ENCODE measurements at regions of chr2 and their contacts with region 1.

Region 1: DNA sequence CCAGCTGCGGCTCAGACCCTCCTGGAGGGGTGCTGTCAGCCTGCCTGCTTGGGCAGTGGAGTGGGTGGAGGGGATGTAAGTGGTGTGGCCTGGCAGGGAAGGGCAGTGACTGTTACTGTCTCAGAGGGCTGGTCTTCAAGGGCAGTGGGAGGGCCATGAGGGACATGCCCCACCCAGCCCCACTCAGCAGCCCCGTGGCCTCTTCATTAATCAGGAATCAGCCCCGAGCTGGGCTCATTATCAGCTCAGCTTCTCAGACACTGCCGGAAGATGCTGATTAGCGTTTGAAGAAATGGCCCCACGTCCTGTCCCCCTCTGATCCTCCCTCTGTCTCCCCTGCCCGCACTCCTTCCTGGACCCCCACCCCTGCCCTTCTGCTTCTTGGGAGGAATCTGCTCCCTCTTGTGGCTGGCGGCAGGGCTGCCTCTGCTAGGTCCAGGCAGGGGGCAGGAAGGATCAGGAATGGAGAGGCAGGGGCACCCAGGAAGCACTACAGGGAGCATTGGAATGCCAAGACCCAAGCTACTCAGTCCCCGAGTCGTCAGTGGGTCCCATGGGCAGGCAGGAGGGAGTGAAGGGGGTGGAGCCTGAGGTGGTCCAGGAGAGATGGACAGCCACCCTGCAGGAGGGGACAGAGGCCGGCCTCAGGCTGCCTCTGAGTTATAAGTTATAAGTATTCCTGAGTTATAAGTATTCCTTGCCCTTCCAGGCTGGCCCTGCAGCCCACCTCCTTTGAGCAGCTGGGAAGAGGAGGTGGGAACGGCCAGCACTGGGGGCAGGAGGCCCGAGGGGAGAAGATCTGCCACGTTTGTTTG is 7.0 kb downstream of the ASIC4 start:
- DNase-seq: no peak
- ATAC-seq: peak; percentile 32
- H3K4me3 ChIP-seq: no peak overlapping the region
- H3K27ac ChIP-seq: no peak overlapping the region
- H3K4me1 ChIP-seq: peaks cover 10% of the 10 kb centered on the region
- H3K27me3 ChIP-seq: peaks cover 91% of the 10 kb centered on the region
- CTCF ChIP-seq: peak; percentile 40

Region 2: DNA sequence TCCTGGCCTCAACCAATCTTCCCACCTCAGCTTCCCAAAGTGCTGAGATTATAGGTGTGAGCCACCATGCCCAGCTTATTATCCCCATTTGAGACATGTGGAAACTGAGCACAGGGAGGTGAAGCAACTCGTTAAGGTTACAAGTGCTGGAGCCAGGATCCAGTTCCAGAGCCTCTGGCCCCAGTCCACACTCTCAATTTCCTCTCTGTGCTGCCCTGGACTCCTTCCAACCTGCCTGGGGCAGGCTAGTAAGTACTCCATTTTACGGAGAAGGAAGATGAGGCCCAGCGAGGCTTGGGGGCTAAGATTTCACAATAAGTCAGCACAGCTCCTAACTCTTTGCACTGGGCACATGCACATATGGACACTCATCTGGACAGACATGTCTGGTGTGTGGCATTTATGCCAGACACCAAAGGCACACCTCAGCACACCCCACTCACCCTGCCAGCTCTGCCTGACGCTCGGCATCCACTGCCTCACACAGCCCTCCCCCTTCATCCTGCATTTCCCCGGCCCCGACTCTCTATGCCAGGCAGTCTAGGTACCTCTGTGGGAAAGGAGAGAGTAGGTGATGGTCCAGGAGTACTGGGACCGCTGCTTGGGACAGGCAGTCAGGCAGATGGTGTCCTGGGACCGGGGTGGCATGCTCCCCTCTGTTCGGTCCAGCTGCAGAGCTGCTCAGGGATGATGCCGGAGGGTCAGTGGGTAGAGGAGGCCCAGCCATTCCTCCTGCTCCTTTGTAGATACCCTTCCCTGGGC is 500.5 kb before region 1 on chr2:
- intact Hi-C with region 1: no loop called
- DNase-seq: no peak
- ATAC-seq: peak; percentile 15
- H3K4me3 ChIP-seq: no peak overlapping the region
- H3K27ac ChIP-seq: no peak overlapping the region
- H3K4me1 ChIP-seq: no peaks in the 10 kb centered on the region
- H3K27me3 ChIP-seq: peaks cover 8% of the 10 kb centered on the region
- CTCF ChIP-seq: no peak

Region 3: GRCh38 chr2:219402665-219403515 is 118.4 kb before region 1 on chr2:
- intact Hi-C with region 1: loop called (anchors 10 kb)
- DNase-seq: no peak
- ATAC-seq: peak; percentile 87
- H3K4me3 ChIP-seq: no peak overlapping the region
- H3K27ac ChIP-seq: no peak overlapping the region
- H3K4me1 ChIP-seq: peaks cover 7% of the 10 kb centered on the region
- H3K27me3 ChIP-seq: no peaks in the 10 kb centered on the region
- CTCF ChIP-seq: peak; percentile 95

Measured in upper lobe of right lung (tissue), 1 donor.